ENCODE measurements at regions of chr2 and their contacts with region 1.

Region 1: DNA sequence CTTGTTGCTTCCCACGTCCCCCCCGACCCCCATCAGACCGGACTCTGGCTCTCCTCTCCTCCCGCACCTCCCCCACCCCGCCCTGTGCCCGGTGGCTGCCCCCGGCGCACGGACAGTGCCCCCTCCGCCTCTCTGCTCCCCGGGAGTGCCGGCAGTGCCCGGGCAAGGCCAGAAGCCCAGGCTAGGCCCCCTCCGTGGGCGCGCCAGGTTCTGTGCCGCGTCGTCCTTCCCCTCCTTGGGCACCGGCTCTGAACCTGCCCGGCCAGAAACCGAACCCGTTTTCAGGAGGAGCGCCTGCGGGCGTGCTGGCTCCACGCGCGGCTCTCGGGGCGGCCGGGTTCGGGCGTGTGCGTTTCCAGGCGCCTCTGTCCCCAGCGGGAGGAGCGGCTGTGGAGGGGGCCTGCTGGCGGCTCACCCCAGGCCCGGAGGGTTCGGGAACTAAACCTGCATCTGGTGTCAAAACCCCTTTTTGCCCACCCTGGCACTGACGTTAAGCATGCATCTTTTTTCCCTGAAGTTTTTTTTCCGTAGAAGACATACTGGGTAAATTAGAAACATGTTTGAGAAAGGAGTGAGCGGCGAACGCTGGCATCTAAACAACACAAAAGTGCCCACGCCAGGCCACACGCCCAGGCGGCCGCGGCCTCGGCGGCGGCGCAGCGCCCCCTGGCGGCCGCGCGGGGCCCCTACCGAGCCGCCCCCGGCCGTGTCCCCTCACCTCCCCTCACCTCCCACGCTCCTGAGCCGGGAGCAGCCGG is 123.9 kb upstream of the SLC1A4 start:
- DNase-seq: peak; percentile 49 to 73
- H3K4me3 ChIP-seq: peak overlapping the region; percentile 41
- H3K4me1 ChIP-seq: peaks cover 12% of the 10 kb centered on the region
- H3K27me3 ChIP-seq: no peaks in the 10 kb centered on the region

Region 2: DNA sequence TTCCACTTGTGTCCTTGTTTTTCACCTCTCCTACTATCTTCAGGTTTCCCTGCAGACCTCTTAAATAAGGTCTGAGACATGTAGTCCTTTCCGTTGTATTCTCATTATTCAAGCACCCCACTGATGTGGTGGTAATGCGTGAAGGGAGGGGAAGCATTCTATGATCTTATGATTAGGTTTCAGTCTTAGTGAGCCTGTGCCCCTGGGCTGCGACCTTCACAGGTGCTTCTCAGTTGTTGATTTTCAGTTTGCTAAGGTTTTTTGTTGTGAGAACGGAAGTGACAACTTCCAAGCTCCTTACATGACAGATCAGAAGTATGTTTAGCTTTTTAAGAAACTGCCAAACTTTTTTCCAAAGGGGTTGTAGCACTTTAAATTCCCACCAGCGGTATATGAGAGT is 887.3 kb before region 1 on chr2:
- in situ Hi-C with region 1: no loop called
- DNase-seq: no peak
- H3K4me3 ChIP-seq: no peak overlapping the region
- H3K4me1 ChIP-seq: peaks cover 9% of the 10 kb centered on the region
- H3K27me3 ChIP-seq: no peaks in the 10 kb centered on the region

Region 3: GRCh38 chr2:64295326-64296139 is 569.7 kb before region 1 on chr2:
- in situ Hi-C with region 1: no loop called
- DNase-seq: no peak
- H3K4me3 ChIP-seq: no peak overlapping the region
- H3K4me1 ChIP-seq: no peaks in the 10 kb centered on the region
- H3K27me3 ChIP-seq: peaks cover 22% of the 10 kb centered on the region

Region 4: GRCh38 chr2:64595397-64596160 is 269.7 kb before region 1 on chr2:
- in situ Hi-C with region 1: loop called (anchors 5 kb)
- DNase-seq: peak in 1 of 2 experiments; percentile 29
- H3K4me3 ChIP-seq: no peak overlapping the region
- H3K4me1 ChIP-seq: no peaks in the 10 kb centered on the region
- H3K27me3 ChIP-seq: no peaks in the 10 kb centered on the region

Region 5: GRCh38 chr2:64644177-64645004 is 220.9 kb before region 1 on chr2:
- in situ Hi-C with region 1: loop called (anchors 10 kb)
- DNase-seq: peak; percentile 77 to 90
- H3K4me3 ChIP-seq: peak overlapping the region; percentile 23
- H3K4me1 ChIP-seq: peaks cover 42% of the 10 kb centered on the region
- H3K27me3 ChIP-seq: no peaks in the 10 kb centered on the region

Measured in HAP-1 (cell line).